GM12878 (cell line): ENCODE measurements at regions of chr4 and their contacts with region 1.

Region 1: DNA sequence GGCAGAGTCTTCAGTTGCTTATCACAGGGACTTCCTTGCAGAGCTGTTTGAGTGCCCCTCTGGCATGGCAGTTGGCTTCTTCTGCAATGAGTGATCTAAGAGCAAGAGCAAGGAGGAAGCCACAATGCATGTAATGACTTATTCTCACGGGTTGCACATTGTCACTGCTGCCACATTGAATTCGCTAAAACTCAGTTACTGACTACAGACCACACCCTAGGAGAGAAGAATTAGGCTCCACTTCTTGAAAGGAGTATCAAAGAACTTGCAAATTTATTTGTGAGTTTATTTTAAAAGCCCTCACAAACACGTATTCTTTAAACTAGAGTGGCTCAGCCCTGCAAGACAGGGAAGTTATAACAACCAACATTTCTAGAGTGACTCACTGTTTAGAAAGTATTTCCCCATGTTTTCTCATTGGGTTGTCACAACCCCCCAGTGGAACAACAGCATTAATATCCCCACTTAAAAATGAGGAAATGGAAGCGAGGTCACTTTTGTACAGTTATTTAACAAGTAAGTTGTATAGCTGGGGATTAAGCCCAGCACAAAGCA is 32.4 kb upstream of the RBPJ start:
- DNase-seq: peak; percentile 73
- ATAC-seq: peak; percentile 91
- H3K4me3 ChIP-seq: no peak overlapping the region
- H3K27ac ChIP-seq: peak overlapping the region; percentile 79
- H3K4me1 ChIP-seq: peaks cover 15% of the 10 kb centered on the region
- H3K27me3 ChIP-seq: no peaks in the 10 kb centered on the region
- CTCF ChIP-seq: no peak
- EP300 ChIP-seq: 0 out of 4 replicates have a peak, but pooled peaks of 1 of the 2 experiments have one; percentile 14
- POLR2A ChIP-seq: 0 out of 2 replicates have a peak, but pooled peaks have one; percentile 29
- RAD21 ChIP-seq: no peak

Region 2: DNA sequence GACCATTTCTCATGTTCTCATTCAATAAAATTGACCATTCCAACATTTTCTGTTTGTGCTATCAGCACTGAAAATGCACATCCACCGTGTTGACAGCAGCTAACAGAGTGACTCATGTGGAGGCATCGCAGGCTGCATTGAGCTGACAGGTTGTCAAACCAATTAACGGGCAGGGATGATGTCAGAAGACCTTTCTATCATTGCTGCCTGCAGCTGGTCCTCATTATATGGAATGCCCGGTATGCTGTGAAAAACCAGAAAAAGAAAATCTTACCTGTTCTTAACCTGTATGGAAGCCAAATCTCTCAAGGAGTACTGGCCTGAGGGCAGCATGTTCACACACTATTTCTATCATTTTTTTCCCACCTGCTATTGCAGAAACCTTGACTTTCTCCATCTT is 172.3 kb before region 1 on chr4:
- CTCF ChIA-PET with region 1: no interaction called
- POLR2A ChIA-PET with region 1: interaction called, 10 read pairs
- RAD21 ChIA-PET with region 1: interaction called, 3 read pairs
- SMC1A ChIA-PET with region 1: no interaction called
- in situ Hi-C with region 1: no loop called
- intact Hi-C with region 1: no loop called
- DNase-seq: no peak
- ATAC-seq: no peak
- H3K4me3 ChIP-seq: no peak overlapping the region
- H3K27ac ChIP-seq: no peak overlapping the region
- H3K4me1 ChIP-seq: no peaks in the 10 kb centered on the region
- H3K27me3 ChIP-seq: no peaks in the 10 kb centered on the region
- CTCF ChIP-seq: no peak
- EP300 ChIP-seq: no peak
- POLR2A ChIP-seq: no peak
- RAD21 ChIP-seq: no peak

Region 3: DNA sequence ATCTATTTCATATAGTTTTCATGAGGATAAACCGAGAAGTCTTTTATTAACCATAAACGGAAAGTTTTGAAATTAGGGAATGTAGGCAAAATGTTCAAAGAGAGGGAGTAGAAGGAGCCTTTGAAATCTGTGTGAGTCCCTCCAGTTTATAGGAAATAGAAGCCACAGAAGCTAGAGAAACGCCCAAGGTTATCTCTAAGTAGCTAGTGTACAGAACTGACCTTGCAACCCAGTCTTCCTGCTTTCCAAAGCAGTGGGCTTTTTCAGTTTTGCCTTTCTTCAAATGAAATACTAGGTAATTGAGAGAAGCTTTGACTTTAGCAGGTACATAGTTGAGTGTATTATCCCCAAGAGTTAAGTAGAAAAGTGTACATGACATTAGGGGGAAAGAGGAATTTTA is 611.6 kb after region 1 on chr4:
- CTCF ChIA-PET with region 1: no interaction called
- POLR2A ChIA-PET with region 1: no interaction called
- RAD21 ChIA-PET with region 1: no interaction called
- SMC1A ChIA-PET with region 1: no interaction called
- in situ Hi-C with region 1: no loop called
- intact Hi-C with region 1: no loop called
- DNase-seq: no peak
- ATAC-seq: peak; percentile 26; the same call in 2 of the 3 replicates
- H3K4me3 ChIP-seq: no peak overlapping the region
- H3K27ac ChIP-seq: no peak overlapping the region
- H3K4me1 ChIP-seq: no peaks in the 10 kb centered on the region
- H3K27me3 ChIP-seq: no peaks in the 10 kb centered on the region
- CTCF ChIP-seq: no peak
- EP300 ChIP-seq: no peak
- POLR2A ChIP-seq: no peak
- RAD21 ChIP-seq: no peak